Activated naive CD4-positive, alpha-beta T cell treated with anti-CD3 and anti-CD28 coated beads for 36 hours (primary cell): ENCODE measurements at regions of chr11 and their contacts with region 1.

Region 1: GRCh38 chr11:44911029-44911814 is 39.5 kb downstream of the TP53I11 start:
- DNase-seq: peak; percentile 96
- H3K4me3 Mint-ChIP-seq: no peak overlapping the region
- H3K27ac Mint-ChIP-seq: no peak overlapping the region
- H3K4me1 Mint-ChIP-seq: peaks cover 3% of the 10 kb centered on the region
- H3K27me3 Mint-ChIP-seq: no peaks in the 10 kb centered on the region

Region 2: GRCh38 chr11:44519989-44520737 is 391.1 kb before region 1 on chr11:
- CTCF ChIA-PET with region 1: interaction called, 10 read pairs
- intact Hi-C with region 1: no loop called
- DNase-seq: no peak
- H3K4me3 Mint-ChIP-seq: no peak overlapping the region
- H3K27ac Mint-ChIP-seq: no peak overlapping the region
- H3K4me1 Mint-ChIP-seq: no peaks in the 10 kb centered on the region
- H3K27me3 Mint-ChIP-seq: peaks cover 9% of the 10 kb centered on the region

Region 3: GRCh38 chr11:44634401-44635281 is 276.6 kb before region 1 on chr11:
- CTCF ChIA-PET with region 1: interaction called, 5 read pairs
- intact Hi-C with region 1: loop called (anchors 1 kb)
- DNase-seq: no peak
- H3K4me3 Mint-ChIP-seq: no peak overlapping the region
- H3K27ac Mint-ChIP-seq: no peak overlapping the region
- H3K4me1 Mint-ChIP-seq: peaks cover 11% of the 10 kb centered on the region
- H3K27me3 Mint-ChIP-seq: peaks cover 2% of the 10 kb centered on the region

Region 4: GRCh38 chr11:44775366-44775984 is 135.7 kb before region 1 on chr11:
- CTCF ChIA-PET with region 1: interaction called, 13 read pairs
- intact Hi-C with region 1: loop called (anchors 5 kb)
- DNase-seq: peak; percentile 82
- H3K4me3 Mint-ChIP-seq: no peak overlapping the region
- H3K27ac Mint-ChIP-seq: no peak overlapping the region
- H3K4me1 Mint-ChIP-seq: peaks cover 7% of the 10 kb centered on the region
- H3K27me3 Mint-ChIP-seq: no peaks in the 10 kb centered on the region

Region 5: DNA sequence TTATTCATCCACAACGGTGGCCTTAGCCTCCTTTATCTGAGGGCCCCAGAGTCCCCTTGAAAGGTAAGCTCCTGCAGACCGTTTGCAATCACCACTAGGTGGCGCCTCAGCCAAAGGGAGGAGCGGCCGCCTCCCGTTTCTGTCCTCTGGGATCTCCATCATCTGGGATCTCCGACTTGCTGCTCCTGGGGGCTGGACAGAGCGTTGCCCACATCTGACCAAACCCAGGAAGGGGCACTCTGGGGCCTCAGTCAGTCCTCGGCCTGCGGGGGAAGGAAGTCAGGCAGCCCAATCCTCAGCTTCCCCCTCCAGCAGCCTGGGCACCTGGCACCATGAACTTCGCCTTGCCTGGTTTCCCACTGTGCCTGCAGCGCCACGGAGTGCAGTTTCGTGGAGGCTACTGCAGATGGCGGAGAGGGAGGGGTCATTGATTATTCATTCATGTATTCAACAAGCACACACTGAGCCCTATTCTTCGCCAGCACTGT is 16.0 kb after region 1 on chr11:
- CTCF ChIA-PET with region 1: interaction called, 17 read pairs
- intact Hi-C with region 1: no loop called
- DNase-seq: peak; percentile 69
- H3K4me3 Mint-ChIP-seq: no peak overlapping the region
- H3K27ac Mint-ChIP-seq: no peak overlapping the region
- H3K4me1 Mint-ChIP-seq: no peaks in the 10 kb centered on the region
- H3K27me3 Mint-ChIP-seq: no peaks in the 10 kb centered on the region

Region 6: DNA sequence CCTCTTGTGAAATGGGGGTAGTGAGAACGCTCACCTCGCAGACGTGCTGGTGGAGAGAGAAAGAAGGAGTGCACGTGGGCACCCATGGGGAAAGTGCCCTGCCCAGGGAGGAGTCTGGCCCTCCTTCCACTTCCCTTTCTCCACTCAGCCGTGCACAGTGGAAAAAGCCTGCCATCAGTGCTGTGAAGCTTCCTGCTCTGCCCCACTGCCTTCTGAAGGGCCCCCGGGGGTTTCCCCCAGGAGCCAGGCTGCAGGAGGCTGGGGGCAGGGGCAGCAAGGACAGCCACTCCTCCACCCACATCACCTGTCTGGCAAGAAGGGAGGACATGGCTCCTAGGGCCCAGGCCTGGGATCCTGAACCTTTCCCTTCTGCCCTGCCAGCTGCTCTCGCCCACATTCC is 31.9 kb after region 1 on chr11:
- CTCF ChIA-PET with region 1: no interaction called
- intact Hi-C with region 1: no loop called
- DNase-seq: peak; percentile 70
- H3K4me3 Mint-ChIP-seq: no peak overlapping the region
- H3K27ac Mint-ChIP-seq: no peak overlapping the region
- H3K4me1 Mint-ChIP-seq: peaks cover 11% of the 10 kb centered on the region
- H3K27me3 Mint-ChIP-seq: no peaks in the 10 kb centered on the region

Region 7: GRCh38 chr11:45233121-45233803 is 322.0 kb after region 1 on chr11:
- CTCF ChIA-PET with region 1: no interaction called
- intact Hi-C with region 1: no loop called
- DNase-seq: peak; percentile 72
- H3K4me3 Mint-ChIP-seq: no peak overlapping the region
- H3K27ac Mint-ChIP-seq: no peak overlapping the region
- H3K4me1 Mint-ChIP-seq: no peaks in the 10 kb centered on the region
- H3K27me3 Mint-ChIP-seq: peaks cover 3% of the 10 kb centered on the region